HAP-1 (cell line): ENCODE measurements at regions of chr1 and their contacts with region 1.

Region 1: GRCh38 chr1:182198049-182198501 is 136.6 kb upstream of the ZNF648 start:
- DNase-seq: no peak
- H3K4me3 ChIP-seq: no peak overlapping the region
- H3K4me1 ChIP-seq: no peaks in the 10 kb centered on the region
- H3K27me3 ChIP-seq: no peaks in the 10 kb centered on the region

Region 2: DNA sequence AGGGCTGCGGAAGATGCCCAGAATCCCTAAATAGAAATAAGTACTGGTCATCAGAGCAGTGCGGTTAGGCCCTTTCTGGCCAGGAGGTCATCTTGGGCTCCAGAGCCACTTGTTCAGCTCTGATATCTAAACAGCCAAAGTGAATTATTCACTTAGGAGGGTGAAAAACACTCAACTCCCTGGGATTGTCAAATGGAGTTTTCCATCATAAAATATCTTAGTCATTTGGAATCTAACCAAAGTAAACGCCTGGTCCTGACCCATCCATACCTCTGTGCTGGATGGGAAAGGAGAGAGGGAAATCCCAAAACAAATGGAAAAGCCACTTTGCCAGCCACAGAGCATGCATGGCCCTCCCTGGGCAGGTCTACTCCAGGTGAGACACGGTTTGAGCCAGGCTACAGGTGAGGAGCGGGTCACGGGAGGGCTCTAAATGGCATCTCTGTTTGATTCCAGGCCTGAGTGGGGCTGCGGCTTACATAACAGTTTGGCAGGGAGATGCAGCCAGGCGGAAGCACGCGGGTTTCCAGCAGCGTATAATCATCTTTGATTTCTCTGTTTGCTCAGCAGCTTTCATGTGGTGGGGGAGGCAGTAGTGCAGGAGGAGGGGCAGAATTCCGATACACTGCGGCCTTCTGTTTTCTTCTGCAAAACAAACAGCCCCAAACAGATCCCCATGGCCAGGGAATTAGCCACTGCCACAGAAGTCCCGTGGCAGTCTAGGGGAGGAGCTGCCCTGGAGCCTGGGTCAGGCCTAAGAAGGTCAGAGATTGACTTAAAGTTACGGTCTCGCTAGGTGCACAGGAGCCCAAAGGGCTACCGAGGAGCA is 77.5 kb before region 1 on chr1:
- in situ Hi-C with region 1: no loop called
- DNase-seq: no peak
- H3K4me3 ChIP-seq: no peak overlapping the region
- H3K4me1 ChIP-seq: no peaks in the 10 kb centered on the region
- H3K27me3 ChIP-seq: peaks cover 6% of the 10 kb centered on the region; the same call in 1 of the 2 replicates

Region 3: GRCh38 chr1:182143154-182143657 is 54.9 kb before region 1 on chr1:
- in situ Hi-C with region 1: no loop called
- DNase-seq: peak; percentile 59 to 93
- H3K4me3 ChIP-seq: no peak overlapping the region
- H3K4me1 ChIP-seq: no peaks in the 10 kb centered on the region
- H3K27me3 ChIP-seq: no peaks in the 10 kb centered on the region

Region 4: GRCh38 chr1:182279724-182280503 is 81.8 kb after region 1 on chr1:
- in situ Hi-C with region 1: loop called (anchors 10 kb)
- DNase-seq: no peak
- H3K4me3 ChIP-seq: no peak overlapping the region
- H3K4me1 ChIP-seq: no peaks in the 10 kb centered on the region
- H3K27me3 ChIP-seq: no peaks in the 10 kb centered on the region